CD4-positive, alpha-beta memory T cell (primary cell): ENCODE measurements at regions of chr12 and their contacts with region 1.

Region 1: DNA sequence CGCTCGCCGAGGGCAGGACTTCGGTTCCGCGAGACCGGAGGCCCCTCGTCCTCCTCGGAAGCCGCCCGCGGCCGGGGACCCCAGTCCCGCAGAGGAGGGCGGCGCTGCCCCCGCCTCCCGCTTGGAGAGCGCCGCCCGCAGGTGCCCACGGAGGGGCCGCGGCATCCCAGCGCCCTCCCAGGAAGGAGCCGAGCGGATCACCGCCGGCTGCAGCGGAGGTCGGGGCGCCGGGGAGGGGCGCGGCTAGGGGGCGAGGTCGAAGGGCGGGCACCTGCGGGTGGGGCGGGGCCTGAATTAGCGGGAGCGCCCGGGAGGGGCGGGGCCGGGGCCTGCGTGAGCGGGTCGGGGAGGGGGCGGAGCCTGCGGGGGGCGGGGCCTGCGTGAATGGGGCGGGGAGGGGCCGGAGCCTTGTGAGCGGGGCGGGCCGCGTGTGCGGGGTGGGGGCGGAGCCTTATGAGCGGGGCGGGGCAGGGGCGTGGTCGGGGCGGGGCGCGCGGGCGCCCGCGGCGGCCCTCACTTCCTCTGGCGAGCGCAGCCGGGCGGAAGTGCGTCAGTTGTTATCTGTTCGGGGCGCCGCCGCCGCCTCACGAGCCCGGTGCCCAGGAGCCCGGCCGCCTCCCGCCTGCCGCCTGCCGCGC is at the start of gene FBRSL1:
- DNase-seq: peak; percentile 89 to 92 (median 90)
- H3K4me3 ChIP-seq: peak within 1 kb of the TSS; percentile 64 to 81
- H3K4me3 Mint-ChIP-seq: peak within 1 kb of the TSS; percentile 86 to 97 (median 93)
- H3K27ac ChIP-seq: peak within 1 kb of the TSS; percentile 83
- H3K27ac Mint-ChIP-seq: peak within 1 kb of the TSS; percentile 92 to 98 (median 97)
- H3K4me1 ChIP-seq: peaks cover 53% of the 10 kb centered on the region
- H3K4me1 Mint-ChIP-seq: peaks cover 38 to 75% (median 53%) of the 10 kb centered on the region in 4 donors
- H3K27me3 ChIP-seq: no peaks in the 10 kb centered on the region
- H3K27me3 Mint-ChIP-seq: no peaks in the 10 kb centered on the region
- total RNA-seq, gene FBRSL1: 97.3 to 101 TPM

Region 2: GRCh38 chr12:132429946-132430643 is 59.6 kb before region 1 on chr12:
- CTCF ChIA-PET with region 1: interaction called, 4 read pairs
- POLR2A ChIA-PET with region 1: interaction called, 23 read pairs
- intact Hi-C with region 1: loop called (anchors 5 kb)
- DNase-seq: peak; percentile 61 to 76 (median 72)
- H3K4me3 ChIP-seq: peak overlapping the region in 1 of 2 donors; percentile 23
- H3K4me3 Mint-ChIP-seq: peak overlapping the region; percentile 36 to 86 (median 71)
- H3K27ac ChIP-seq: no peak overlapping the region
- H3K27ac Mint-ChIP-seq: peak overlapping the region in 6 of 7 donors; percentile 32 to 75 (median 66)
- H3K4me1 ChIP-seq: peaks cover 36% of the 10 kb centered on the region
- H3K4me1 Mint-ChIP-seq: peaks cover 17 to 45% (median 24%) of the 10 kb centered on the region in 4 donors
- H3K27me3 ChIP-seq: no peaks in the 10 kb centered on the region
- H3K27me3 Mint-ChIP-seq: no peaks in the 10 kb centered on the region

Region 3: GRCh38 chr12:132445884-132446632 is 43.7 kb before region 1 on chr12:
- CTCF ChIA-PET with region 1: interaction called, 4 read pairs
- POLR2A ChIA-PET with region 1: interaction called, 55 read pairs
- intact Hi-C with region 1: loop called (anchors 1 kb)
- DNase-seq: peak; percentile 65 to 88 (median 84)
- H3K4me3 ChIP-seq: peak overlapping the region; percentile 36 to 56
- H3K4me3 Mint-ChIP-seq: peak overlapping the region; percentile 79 to 92 (median 87)
- H3K27ac ChIP-seq: peak overlapping the region; percentile 86
- H3K27ac Mint-ChIP-seq: peak overlapping the region; percentile 99 to 100 (median 99)
- H3K4me1 ChIP-seq: peaks cover 44% of the 10 kb centered on the region
- H3K4me1 Mint-ChIP-seq: peaks cover 24 to 43% (median 35%) of the 10 kb centered on the region in 4 donors
- H3K27me3 ChIP-seq: no peaks in the 10 kb centered on the region
- H3K27me3 Mint-ChIP-seq: peaks cover 0 to 2% of the 10 kb centered on the region in 2 donors

Region 4: DNA sequence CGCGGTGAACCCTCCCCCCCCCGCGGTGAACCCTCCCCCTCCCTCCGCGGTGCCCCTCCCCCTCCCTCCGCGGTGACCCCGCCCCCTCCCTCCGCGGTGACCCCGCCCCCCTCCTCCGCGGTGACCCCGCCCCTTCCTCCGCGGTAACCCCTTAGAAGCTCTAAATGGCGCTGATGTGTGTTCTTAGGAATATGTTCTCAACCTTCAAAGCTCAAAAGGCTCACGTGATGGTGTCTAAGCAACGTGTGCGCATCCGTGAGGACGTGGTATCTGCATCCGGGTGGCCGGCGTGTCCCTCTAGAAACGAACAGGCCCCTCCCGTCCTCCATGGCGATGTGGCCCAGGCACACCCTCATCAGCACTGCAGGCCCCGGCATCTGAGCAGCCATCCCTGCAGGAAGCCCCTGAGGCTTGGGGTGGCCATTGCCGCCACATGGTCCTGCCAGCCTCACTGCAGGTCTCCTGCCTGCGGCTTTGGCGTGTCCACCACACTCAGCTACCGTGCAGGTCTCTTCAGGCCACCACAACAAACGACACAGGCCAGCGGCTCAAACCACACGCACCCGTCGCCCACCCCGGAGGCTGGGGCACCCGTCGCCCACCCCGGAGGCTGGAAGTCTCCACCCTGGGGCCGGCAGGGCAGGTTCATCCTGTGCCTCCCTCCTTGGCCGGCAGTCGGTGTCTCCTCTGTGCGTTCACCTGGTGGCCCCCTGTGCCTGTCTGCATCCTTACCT is 14.2 kb before region 1 on chr12:
- CTCF ChIA-PET with region 1: no interaction called
- POLR2A ChIA-PET with region 1: interaction called, 70 read pairs
- intact Hi-C with region 1: loop called (anchors 1 kb)
- DNase-seq: peak; percentile 40 to 60 (median 44)
- H3K4me3 ChIP-seq: peak overlapping the region in 1 of 2 donors; percentile 43
- H3K4me3 Mint-ChIP-seq: peak overlapping the region; percentile 24 to 81 (median 61)
- H3K27ac ChIP-seq: no peak overlapping the region
- H3K27ac Mint-ChIP-seq: peak overlapping the region; percentile 20 to 95 (median 75)
- H3K4me1 ChIP-seq: peaks cover 32% of the 10 kb centered on the region
- H3K4me1 Mint-ChIP-seq: peaks cover 12 to 43% (median 26%) of the 10 kb centered on the region in 4 donors
- H3K27me3 ChIP-seq: no peaks in the 10 kb centered on the region
- H3K27me3 Mint-ChIP-seq: peaks cover 0 to 3% of the 10 kb centered on the region in 2 donors

Region 5: GRCh38 chr12:132529906-132530305 is 40.2 kb after region 1 on chr12:
- CTCF ChIA-PET with region 1: no interaction called
- POLR2A ChIA-PET with region 1: no interaction called
- intact Hi-C with region 1: no loop called
- DNase-seq: no peak
- H3K4me3 ChIP-seq: no peak overlapping the region
- H3K4me3 Mint-ChIP-seq: no peak overlapping the region
- H3K27ac ChIP-seq: no peak overlapping the region
- H3K27ac Mint-ChIP-seq: peak overlapping the region in 3 of 7 donors; percentile 17 to 90 (median 48)
- H3K4me1 ChIP-seq: no peaks in the 10 kb centered on the region
- H3K4me1 Mint-ChIP-seq: peaks cover 0 to 6% (median 3%) of the 10 kb centered on the region in 4 donors
- H3K27me3 ChIP-seq: no peaks in the 10 kb centered on the region
- H3K27me3 Mint-ChIP-seq: no peaks in the 10 kb centered on the region

Region 6: DNA sequence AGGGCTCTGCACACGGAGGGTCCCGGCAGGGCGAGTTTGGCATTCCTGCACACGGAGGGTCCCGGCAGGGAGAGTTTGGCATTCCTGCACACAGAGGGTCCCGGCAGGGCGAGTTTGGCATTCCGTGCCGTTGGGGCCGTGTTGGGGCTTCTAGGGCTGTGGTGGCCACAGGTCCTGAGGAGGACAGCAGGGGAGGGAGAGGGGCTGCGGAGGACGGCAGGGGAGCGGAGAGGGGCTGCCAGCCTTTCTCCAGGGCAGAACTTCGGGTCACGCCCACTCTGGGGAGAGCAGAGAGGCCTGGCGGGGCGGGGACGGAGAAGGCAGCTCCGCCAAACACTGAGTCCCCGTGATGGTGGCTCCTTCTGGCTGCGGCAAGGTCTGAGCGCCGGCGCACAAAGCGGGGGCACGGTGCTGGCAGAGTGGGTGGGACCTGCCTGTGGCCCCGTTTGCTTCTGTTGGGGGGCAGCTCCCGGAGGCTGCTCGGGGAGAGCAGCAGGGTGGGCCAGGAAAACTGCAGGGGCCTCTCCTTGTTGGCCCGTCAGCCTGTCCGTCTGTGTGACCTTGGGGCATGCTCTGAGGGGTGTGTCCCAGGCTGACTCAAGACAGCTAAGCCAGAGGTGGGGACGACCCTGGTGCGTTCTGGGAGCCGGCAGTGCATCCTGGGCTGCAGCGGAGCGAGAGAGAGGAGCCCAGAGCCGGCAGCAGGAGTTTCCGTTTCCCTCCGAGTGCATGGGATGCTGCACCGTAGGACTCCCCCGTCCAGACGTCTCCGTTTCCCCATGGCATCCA is 60.5 kb after region 1 on chr12:
- CTCF ChIA-PET with region 1: no interaction called
- POLR2A ChIA-PET with region 1: no interaction called
- intact Hi-C with region 1: no loop called
- DNase-seq: no peak
- H3K4me3 ChIP-seq: no peak overlapping the region
- H3K4me3 Mint-ChIP-seq: no peak overlapping the region
- H3K27ac ChIP-seq: no peak overlapping the region
- H3K27ac Mint-ChIP-seq: peak overlapping the region in 1 of 7 donors; percentile 27
- H3K4me1 ChIP-seq: no peaks in the 10 kb centered on the region
- H3K4me1 Mint-ChIP-seq: no peaks in the 10 kb centered on the region
- H3K27me3 ChIP-seq: no peaks in the 10 kb centered on the region
- H3K27me3 Mint-ChIP-seq: no peaks in the 10 kb centered on the region

Region 7: GRCh38 chr12:132560614-132561426 is 71.1 kb after region 1 on chr12:
- CTCF ChIA-PET with region 1: interaction called, 3 read pairs
- POLR2A ChIA-PET with region 1: no interaction called
- intact Hi-C with region 1: loop called (anchors 1 kb)
- DNase-seq: peak; percentile 63 to 74 (median 68)
- H3K4me3 ChIP-seq: peak overlapping the region in 1 of 2 donors; percentile 19
- H3K4me3 Mint-ChIP-seq: peak overlapping the region; percentile 54 to 80 (median 70)
- H3K27ac ChIP-seq: no peak overlapping the region
- H3K27ac Mint-ChIP-seq: peak overlapping the region in 2 of 7 donors; percentile 18 to 30
- H3K4me1 ChIP-seq: peaks cover 24% of the 10 kb centered on the region
- H3K4me1 Mint-ChIP-seq: peaks cover 8 to 36% (median 15%) of the 10 kb centered on the region in 4 donors
- H3K27me3 ChIP-seq: no peaks in the 10 kb centered on the region
- H3K27me3 Mint-ChIP-seq: peaks cover 0 to 2% of the 10 kb centered on the region in 2 donors